ENCODE measurements at regions of chr7 and their contacts with region 1.

Region 1: GRCh38 chr7:116236020-116236630 is 25.8 kb downstream of the TES start:
- DNase-seq: no peak

Region 2: GRCh38 chr7:116041615-116042014 is 194.5 kb before region 1 on chr7:
- CTCF ChIA-PET with region 1: no interaction called
- POLR2A ChIA-PET with region 1: no interaction called
- DNase-seq: no peak

Region 3: DNA sequence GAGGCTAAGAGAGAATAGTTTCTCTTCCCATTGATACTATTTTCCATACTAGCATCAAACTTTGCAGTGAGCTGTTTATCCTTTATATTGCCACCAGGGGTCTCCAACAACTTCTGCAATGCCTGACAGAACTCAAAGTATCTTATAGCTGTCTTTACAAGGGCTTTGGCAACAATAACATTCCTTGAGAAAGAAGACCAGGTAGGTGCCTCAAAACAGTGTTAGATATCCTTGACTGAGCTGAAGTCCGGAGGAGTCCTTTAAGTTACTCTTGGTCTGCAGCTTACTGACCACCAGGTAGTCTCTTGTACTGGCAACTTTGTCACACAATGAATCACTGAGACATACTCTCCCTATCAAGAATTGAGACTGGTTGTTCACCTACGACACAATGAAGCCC is 55.8 kb before region 1 on chr7:
- CTCF ChIA-PET with region 1: interaction called, 54 read pairs
- POLR2A ChIA-PET with region 1: interaction called, 3 read pairs
- DNase-seq: peak; percentile 52